ENCODE measurements at regions of chr2 and their contacts with region 1.

Region 1: GRCh38 chr2:181104512-181105115 is 124.2 kb downstream of the UBE2E3 start:
- DNase-seq: peak in 1 of 2 experiments; percentile 28
- H3K4me3 ChIP-seq: no peak overlapping the region
- H3K27ac ChIP-seq: no peak overlapping the region
- H3K4me1 ChIP-seq: peaks cover 27% of the 10 kb centered on the region
- H3K27me3 ChIP-seq: no peaks in the 10 kb centered on the region
- CTCF ChIP-seq: peak; percentile 90

Region 2: DNA sequence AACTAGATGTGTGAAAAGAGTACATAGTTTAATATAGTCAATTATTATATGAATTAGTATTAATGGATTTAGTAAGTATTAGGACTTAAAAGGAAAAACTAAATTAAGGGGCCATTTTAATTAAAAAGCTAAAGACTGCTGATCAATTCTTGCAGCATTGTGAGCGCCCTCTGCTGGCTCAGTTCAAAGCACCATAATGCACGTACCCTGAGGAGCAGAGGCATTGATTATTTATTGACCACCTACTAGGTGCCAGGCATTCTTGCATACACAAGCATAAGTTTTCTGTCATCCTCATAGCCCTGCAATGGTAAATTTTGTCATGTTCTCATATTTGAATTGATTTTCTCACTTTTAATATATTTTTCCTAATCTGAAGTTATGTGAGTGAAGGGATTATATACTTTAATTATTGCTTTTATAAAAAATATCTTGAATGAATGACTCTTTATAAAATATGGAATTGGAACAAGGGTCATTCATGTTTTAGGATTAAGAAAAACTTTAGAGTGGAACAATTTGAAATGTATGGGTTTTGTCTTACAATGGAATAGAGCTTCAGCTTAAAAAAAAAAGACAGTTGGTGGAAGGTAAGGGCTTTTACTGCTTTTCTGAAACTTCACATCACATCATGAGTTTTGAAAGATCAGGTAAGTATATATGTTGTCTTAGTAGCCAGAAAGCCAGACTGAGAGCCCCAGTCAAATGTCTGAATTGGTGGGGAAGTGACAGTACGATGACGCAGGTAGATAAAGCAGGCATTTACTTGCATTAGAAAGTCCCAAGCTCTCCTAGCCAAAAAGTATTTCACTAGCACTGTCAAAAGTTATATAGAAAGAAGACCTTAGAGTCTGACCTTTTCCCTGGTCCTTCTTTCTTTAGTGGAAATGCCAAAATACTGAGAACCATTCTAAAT is 362.3 kb after region 1 on chr2:
- CTCF ChIA-PET with region 1: interaction called, 19 read pairs
- POLR2A ChIA-PET with region 1: no interaction called
- intact Hi-C with region 1: loop called (anchors 1 kb)
- DNase-seq: peak in 1 of 2 experiments; percentile 58
- H3K4me3 ChIP-seq: no peak overlapping the region
- H3K27ac ChIP-seq: no peak overlapping the region
- H3K4me1 ChIP-seq: no peaks in the 10 kb centered on the region
- H3K27me3 ChIP-seq: no peaks in the 10 kb centered on the region
- CTCF ChIP-seq: peak; percentile 99

Region 3: GRCh38 chr2:181554061-181554830 is 449.6 kb after region 1 on chr2:
- CTCF ChIA-PET with region 1: interaction called, 15 read pairs
- POLR2A ChIA-PET with region 1: no interaction called
- intact Hi-C with region 1: no loop called
- DNase-seq: no peak
- H3K4me3 ChIP-seq: no peak overlapping the region
- H3K27ac ChIP-seq: no peak overlapping the region
- H3K4me1 ChIP-seq: peaks cover 10% of the 10 kb centered on the region
- H3K27me3 ChIP-seq: no peaks in the 10 kb centered on the region
- CTCF ChIP-seq: no peak

Region 4: GRCh38 chr2:181683518-181684453 is 579.2 kb after region 1 on chr2:
- CTCF ChIA-PET with region 1: no interaction called
- POLR2A ChIA-PET with region 1: no interaction called
- intact Hi-C with region 1: loop called (anchors 10 kb)
- DNase-seq: peak in 1 of 2 experiments; percentile 72
- H3K4me3 ChIP-seq: no peak overlapping the region
- H3K27ac ChIP-seq: no peak overlapping the region
- H3K4me1 ChIP-seq: no peaks in the 10 kb centered on the region
- H3K27me3 ChIP-seq: no peaks in the 10 kb centered on the region
- CTCF ChIP-seq: no peak

Region 5: DNA sequence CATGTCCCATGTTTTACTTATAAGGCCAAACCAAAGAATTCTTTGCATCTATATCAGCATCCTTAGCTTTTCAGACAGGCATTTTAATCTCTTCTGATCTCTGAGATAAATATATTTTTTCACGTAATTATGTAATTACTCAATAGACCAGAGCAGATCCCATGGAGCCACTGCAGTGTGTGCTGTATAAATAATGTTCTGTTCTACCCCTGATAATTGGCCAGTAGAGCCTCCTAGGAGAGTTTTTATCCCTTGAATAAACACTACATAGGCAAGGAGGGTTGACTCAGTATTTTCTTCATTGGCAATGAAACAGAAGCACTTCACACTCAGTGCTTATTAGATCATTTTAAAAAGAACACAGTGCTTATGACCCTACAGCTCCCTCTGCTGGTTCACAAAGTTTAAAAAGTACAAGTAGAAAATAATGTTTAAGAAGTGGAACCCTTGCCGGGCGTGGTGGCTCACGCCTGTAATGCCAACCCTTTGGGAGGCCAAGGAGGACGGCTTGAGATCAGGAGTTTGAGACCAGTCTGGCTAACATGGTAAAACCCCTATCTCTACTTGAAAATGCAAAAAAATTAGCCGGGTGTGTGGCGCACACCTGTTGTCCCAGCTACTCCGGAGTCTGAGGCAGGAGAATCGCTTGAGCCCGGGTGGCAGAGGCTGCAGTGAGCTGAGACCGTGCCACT is 973.0 kb after region 1 on chr2:
- CTCF ChIA-PET with region 1: no interaction called
- POLR2A ChIA-PET with region 1: no interaction called
- intact Hi-C with region 1: loop called (anchors 10 kb)
- DNase-seq: peak; percentile 47 to 76
- H3K4me3 ChIP-seq: no peak overlapping the region
- H3K27ac ChIP-seq: no peak overlapping the region
- H3K4me1 ChIP-seq: 0 out of 2 replicates have a peak, but pooled peaks cover 4% of the 10 kb centered on the region
- H3K27me3 ChIP-seq: no peaks in the 10 kb centered on the region
- CTCF ChIP-seq: peak; percentile 98

Measured in PC-9 (cell line).